B cell (primary cell): ENCODE measurements at regions of chr10 and their contacts with region 1.

Region 1: GRCh38 chr10:72297968-72298773 is 24.4 kb downstream of the DDIT4 start:
- DNase-seq: peak; percentile 96
- ATAC-seq: peak; percentile 71
- H3K4me3 ChIP-seq: peak overlapping the region in 4 of 5 experiments; percentile 74 to 90 (median 86)
- H3K4me3 Mint-ChIP-seq: peak overlapping the region; percentile 92
- H3K27ac ChIP-seq: peak overlapping the region; percentile 99 to 100
- H3K27ac Mint-ChIP-seq: peak overlapping the region; percentile 99
- H3K4me1 ChIP-seq: peaks cover 27 to 38% of the 10 kb centered on the region in 2 donors
- H3K4me1 Mint-ChIP-seq: peaks cover 56% of the 10 kb centered on the region
- H3K27me3 ChIP-seq: no peaks in the 10 kb centered on the region
- H3K27me3 Mint-ChIP-seq: no peaks in the 10 kb centered on the region
- CTCF ChIP-seq: no peak

Region 2: DNA sequence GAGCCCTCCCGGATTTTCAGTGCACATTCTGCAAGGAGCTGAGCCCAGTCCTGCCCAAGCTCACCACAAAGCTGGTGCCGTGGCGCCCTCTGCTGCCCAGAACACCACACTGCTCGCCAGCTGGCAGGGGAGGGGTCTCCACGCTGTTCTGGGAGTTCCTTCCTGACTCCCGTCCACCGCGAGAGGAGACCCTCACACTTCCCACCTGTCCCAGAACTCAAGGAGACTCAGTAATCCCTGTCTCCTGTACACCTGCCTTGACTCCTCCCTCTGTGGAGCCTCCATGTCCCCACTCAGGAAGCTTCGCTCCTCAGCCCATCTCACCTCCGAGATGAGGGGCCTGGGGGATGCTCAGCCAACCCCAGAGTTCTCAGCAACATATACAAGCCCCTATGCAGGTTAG is 589.9 kb before region 1 on chr10:
- CTCF ChIA-PET with region 1: no interaction called
- POLR2A ChIA-PET with region 1: no interaction called
- intact Hi-C with region 1: no loop called
- DNase-seq: peak; percentile 74
- ATAC-seq: peak; percentile 77
- H3K4me3 ChIP-seq: no peak overlapping the region
- H3K4me3 Mint-ChIP-seq: no peak overlapping the region
- H3K27ac ChIP-seq: no peak overlapping the region
- H3K27ac Mint-ChIP-seq: no peak overlapping the region
- H3K4me1 ChIP-seq: peaks cover 16 to 22% of the 10 kb centered on the region in 2 donors
- H3K4me1 Mint-ChIP-seq: peaks cover 29% of the 10 kb centered on the region
- H3K27me3 ChIP-seq: no peaks in the 10 kb centered on the region
- H3K27me3 Mint-ChIP-seq: no peaks in the 10 kb centered on the region
- CTCF ChIP-seq: peak; percentile 89

Region 3: DNA sequence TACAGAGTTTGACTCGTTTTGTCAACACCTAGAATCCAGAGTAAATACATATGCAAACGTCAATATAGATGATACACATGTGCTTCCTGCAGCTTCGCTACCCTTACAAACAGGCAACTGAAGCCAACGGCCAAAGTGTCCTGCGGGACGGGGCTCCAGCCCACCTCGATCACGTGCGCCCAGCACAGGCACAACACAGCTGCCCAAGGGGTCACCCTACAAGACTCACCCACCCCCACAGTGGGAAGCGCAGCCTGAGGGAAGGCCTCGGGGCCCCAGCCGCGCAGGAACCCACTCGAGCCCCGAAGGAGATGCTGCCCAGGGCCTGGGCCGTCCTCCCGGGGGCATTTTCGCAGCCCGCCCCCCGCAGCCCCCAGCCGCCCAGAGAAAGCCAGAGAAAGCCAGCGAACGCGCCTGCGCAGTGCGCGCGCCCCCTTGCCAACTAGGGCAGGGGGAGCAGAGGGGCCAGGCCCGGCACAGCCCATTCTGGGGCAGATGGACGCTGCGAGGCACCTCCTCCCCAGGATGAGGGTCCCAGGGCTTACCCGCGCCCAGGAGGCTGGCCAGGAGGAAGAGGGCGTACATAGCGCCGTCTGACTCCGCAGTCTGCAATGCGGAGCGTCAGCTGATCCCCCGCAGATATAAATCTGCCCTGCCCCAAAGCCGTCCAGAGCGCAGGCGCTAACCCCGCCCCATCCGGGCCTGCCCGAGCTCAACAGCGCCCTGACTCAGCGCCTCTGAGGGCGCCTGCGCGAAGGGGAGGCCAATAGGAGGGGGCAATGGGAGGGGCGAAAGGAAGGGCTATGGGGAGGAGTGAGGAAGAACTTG is 447.3 kb before region 1 on chr10 and contains the start of gene PSAP:
- CTCF ChIA-PET with region 1: no interaction called
- POLR2A ChIA-PET with region 1: no interaction called
- intact Hi-C with region 1: loop called (anchors 2 kb)
- DNase-seq: peak; percentile 96
- ATAC-seq: peak; percentile 97
- H3K4me3 ChIP-seq: peak within 1 kb of the TSS; percentile 72 to 95 (median 91)
- H3K4me3 Mint-ChIP-seq: peak within 1 kb of the TSS; percentile 99
- H3K27ac ChIP-seq: peak within 1 kb of the TSS; percentile 65 to 91
- H3K27ac Mint-ChIP-seq: peak within 1 kb of the TSS; percentile 94
- H3K4me1 ChIP-seq: peaks cover 35 to 51% of the 10 kb centered on the region in 2 donors
- H3K4me1 Mint-ChIP-seq: peaks cover 57% of the 10 kb centered on the region
- H3K27me3 ChIP-seq: no peaks in the 10 kb centered on the region
- H3K27me3 Mint-ChIP-seq: no peaks in the 10 kb centered on the region
- CTCF ChIP-seq: no peak
- total RNA-seq, gene PSAP: 509 and 536 TPM in 2 replicates

Region 4: DNA sequence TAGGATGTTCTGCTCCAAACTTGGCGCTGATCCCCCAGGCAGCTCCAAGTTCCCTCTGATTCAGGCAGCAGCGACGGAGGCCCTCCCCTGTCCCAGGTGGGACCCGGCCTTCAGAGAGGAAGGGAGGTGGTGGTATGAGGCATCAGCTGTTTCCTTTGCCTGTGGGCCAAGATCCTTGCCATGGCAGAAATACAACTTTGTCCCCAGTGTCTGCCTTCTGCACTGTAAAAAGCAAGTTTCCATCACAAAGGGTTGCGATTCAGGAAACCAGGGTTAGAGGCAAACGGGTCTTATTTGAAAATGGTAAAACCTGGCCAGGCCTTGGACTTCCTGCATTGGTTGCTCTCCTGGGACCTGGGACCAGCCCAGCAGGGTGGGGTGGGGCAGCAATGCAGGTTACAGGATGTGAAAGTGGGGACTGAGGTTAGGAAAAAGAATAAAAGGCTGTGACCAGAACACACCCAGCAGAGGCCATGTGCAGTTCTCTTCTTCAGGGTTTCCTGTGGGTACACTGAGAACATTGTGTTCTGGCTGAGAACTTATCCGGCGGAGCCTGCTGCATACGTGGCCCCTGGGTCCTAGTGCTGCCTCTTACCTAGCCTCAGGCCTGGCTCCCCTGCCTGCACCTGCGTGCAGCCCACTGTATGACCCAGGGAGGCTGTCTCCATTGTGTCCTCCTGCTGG is 49.6 kb before region 1 on chr10:
- CTCF ChIA-PET with region 1: interaction called, 6 read pairs
- POLR2A ChIA-PET with region 1: interaction called, 29 read pairs
- intact Hi-C with region 1: loop called (anchors 1 kb)
- DNase-seq: peak; percentile 85
- ATAC-seq: peak; percentile 76
- H3K4me3 ChIP-seq: peak overlapping the region in 4 of 5 experiments; percentile 26 to 49 (median 44)
- H3K4me3 Mint-ChIP-seq: peak overlapping the region; percentile 91
- H3K27ac ChIP-seq: peak overlapping the region; percentile 76 to 81
- H3K27ac Mint-ChIP-seq: peak overlapping the region; percentile 98
- H3K4me1 ChIP-seq: peaks cover 78 to 83% of the 10 kb centered on the region in 2 donors
- H3K4me1 Mint-ChIP-seq: peaks cover 80% of the 10 kb centered on the region
- H3K27me3 ChIP-seq: no peaks in the 10 kb centered on the region
- H3K27me3 Mint-ChIP-seq: no peaks in the 10 kb centered on the region
- CTCF ChIP-seq: no peak

Region 5: DNA sequence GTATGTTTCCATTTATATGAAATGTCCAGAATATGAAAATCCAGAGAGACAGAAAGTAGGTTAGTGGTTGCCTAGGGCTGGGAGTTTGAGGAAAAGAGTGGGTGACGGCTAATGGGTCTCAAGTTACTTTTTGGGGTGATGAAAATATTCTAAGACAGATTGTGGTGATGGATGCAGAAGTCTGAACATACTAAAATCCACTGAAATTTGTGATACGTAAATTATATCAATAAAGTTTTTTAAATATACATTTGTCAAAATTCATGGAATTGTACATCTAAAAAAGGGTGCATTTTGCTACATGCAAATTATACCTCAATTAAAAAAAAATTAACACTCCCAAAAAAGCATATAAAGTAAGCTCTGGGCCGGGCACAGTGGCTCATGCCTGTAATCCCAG is 15.0 kb before region 1 on chr10:
- CTCF ChIA-PET with region 1: interaction called, 3 read pairs
- POLR2A ChIA-PET with region 1: interaction called, 12 read pairs
- intact Hi-C with region 1: no loop called
- DNase-seq: no peak
- ATAC-seq: no peak
- H3K4me3 ChIP-seq: no peak overlapping the region
- H3K4me3 Mint-ChIP-seq: peak overlapping the region; percentile 1
- H3K27ac ChIP-seq: no peak overlapping the region
- H3K27ac Mint-ChIP-seq: no peak overlapping the region
- H3K4me1 ChIP-seq: peaks cover 23 to 27% of the 10 kb centered on the region in 2 donors
- H3K4me1 Mint-ChIP-seq: peaks cover 34% of the 10 kb centered on the region
- H3K27me3 ChIP-seq: no peaks in the 10 kb centered on the region
- H3K27me3 Mint-ChIP-seq: no peaks in the 10 kb centered on the region
- CTCF ChIP-seq: no peak

Region 6: GRCh38 chr10:72331601-72332422 is 33.6 kb after region 1 on chr10:
- CTCF ChIA-PET with region 1: interaction called, 27 read pairs
- POLR2A ChIA-PET with region 1: interaction called, 68 read pairs
- intact Hi-C with region 1: loop called (anchors 1 kb)
- DNase-seq: peak; percentile 93
- ATAC-seq: peak; percentile 79
- H3K4me3 ChIP-seq: peak overlapping the region in 4 of 5 experiments; percentile 31 to 38 (median 35)
- H3K4me3 Mint-ChIP-seq: peak overlapping the region; percentile 76
- H3K27ac ChIP-seq: peak overlapping the region; percentile 83 to 86
- H3K27ac Mint-ChIP-seq: peak overlapping the region; percentile 96
- H3K4me1 ChIP-seq: peaks cover 84 to 100% of the 10 kb centered on the region in 2 donors
- H3K4me1 Mint-ChIP-seq: peaks cover 90% of the 10 kb centered on the region
- H3K27me3 ChIP-seq: no peaks in the 10 kb centered on the region
- H3K27me3 Mint-ChIP-seq: no peaks in the 10 kb centered on the region
- CTCF ChIP-seq: peak; percentile 55

Region 7: DNA sequence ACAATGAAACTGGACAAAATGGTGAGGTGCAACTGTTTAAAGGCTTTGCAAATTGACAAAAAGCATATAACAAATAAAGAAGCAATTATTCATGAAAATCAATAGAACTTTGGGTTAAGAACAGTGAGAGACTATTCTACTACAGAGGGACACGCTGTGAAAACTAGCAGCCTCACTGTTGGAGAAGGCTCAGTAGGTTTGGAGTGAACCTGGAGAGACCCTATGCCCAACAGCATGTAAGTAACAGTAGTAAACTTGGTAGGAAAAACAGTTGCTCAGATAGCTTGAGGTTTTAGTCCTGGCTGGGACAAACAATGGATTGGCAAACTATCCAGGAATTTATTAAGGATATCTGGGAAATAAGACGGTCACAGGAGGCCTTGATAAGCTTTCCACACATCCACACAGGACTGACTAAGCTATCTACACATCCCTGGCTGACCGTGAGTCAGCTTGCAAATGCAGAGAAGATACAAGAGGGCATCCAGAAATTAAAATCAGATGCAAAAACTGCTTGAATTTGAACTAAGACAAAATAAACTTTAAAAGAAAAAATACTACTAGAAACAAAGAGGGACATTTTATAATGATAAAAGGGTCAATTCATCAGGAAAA is 885.6 kb after region 1 on chr10:
- CTCF ChIA-PET with region 1: no interaction called
- POLR2A ChIA-PET with region 1: no interaction called
- intact Hi-C with region 1: no loop called
- DNase-seq: no peak
- ATAC-seq: no peak
- H3K4me3 ChIP-seq: no peak overlapping the region
- H3K4me3 Mint-ChIP-seq: no peak overlapping the region
- H3K27ac ChIP-seq: no peak overlapping the region
- H3K27ac Mint-ChIP-seq: no peak overlapping the region
- H3K4me1 ChIP-seq: no peaks in the 10 kb centered on the region
- H3K4me1 Mint-ChIP-seq: no peaks in the 10 kb centered on the region
- H3K27me3 ChIP-seq: no peaks in the 10 kb centered on the region
- H3K27me3 Mint-ChIP-seq: no peaks in the 10 kb centered on the region
- CTCF ChIP-seq: no peak